ENCODE measurements at regions of chr19 and their contacts with region 1.

Region 1: DNA sequence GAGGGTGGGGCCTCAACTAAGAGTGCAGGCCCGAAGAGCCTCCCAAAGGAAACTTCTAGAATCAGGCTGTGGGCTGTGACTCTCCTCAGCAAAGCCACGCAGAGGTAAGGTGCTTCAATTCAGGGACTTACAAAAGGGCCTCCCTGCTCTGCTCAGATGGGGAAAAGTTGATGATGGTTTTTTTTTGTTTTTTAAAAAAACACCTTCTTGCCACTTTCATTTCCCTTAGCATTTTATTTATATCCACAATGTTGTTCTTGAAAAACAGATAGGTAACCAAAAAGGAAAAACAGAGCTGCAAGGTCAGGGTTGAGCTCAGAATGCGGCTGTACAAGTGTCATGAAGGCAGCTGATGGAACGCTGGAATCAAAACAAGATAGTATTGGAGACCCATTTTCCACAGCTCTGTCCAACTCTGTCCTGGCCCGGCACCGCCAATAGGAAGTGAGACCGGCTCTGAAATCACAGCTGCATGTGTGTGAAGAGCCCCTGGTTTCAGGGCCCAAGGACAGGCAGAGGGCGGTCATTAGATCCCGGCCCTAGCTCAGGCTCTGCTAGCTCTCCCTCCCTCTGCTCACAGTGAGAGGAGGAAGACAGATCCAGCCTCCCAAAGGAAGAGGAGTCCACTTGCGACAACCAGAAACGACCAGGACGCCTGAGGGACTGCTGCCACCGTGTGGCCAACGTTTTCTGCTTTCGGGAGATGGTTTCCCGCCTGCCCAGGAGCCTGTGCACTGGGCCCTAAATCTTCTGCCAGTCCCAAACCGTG is 58.3 kb downstream of the KLF2 start:
- DNase-seq: peak; percentile 36
- ATAC-seq: peak; percentile 72
- H3K4me3 ChIP-seq: no peak overlapping the region
- H3K27ac ChIP-seq: no peak overlapping the region
- H3K4me1 ChIP-seq: no peaks in the 10 kb centered on the region
- H3K27me3 ChIP-seq: no peaks in the 10 kb centered on the region
- CTCF ChIP-seq: peak; percentile 84
- EP300 ChIP-seq: no peak
- POLR2A ChIP-seq: no peak
- RAD21 ChIP-seq: peak; percentile 63; the same call in 1 of the 2 replicates

Region 2: GRCh38 chr19:16041299-16041990 is 341.5 kb before region 1 on chr19:
- CTCF ChIA-PET with region 1: no interaction called
- POLR2A ChIA-PET with region 1: no interaction called
- in situ Hi-C with region 1: loop called (anchors 25 kb)
- intact Hi-C with region 1: no loop called
- DNase-seq: peak; percentile 52
- ATAC-seq: peak; percentile 86
- H3K4me3 ChIP-seq: 0 out of 6 replicates have a peak overlapping the region, but pooled peaks of 1 of the 3 experiments have one; percentile 17
- H3K27ac ChIP-seq: no peak overlapping the region
- H3K4me1 ChIP-seq: peaks cover 17% of the 10 kb centered on the region
- H3K27me3 ChIP-seq: peaks cover 0 to 9% of the 10 kb centered on the region in 2 experiments; a peak in 3 of 5 replicates
- CTCF ChIP-seq: peak; percentile 95
- EP300 ChIP-seq: no peak
- POLR2A ChIP-seq: no peak
- RAD21 ChIP-seq: peak; percentile 90

Region 3: DNA sequence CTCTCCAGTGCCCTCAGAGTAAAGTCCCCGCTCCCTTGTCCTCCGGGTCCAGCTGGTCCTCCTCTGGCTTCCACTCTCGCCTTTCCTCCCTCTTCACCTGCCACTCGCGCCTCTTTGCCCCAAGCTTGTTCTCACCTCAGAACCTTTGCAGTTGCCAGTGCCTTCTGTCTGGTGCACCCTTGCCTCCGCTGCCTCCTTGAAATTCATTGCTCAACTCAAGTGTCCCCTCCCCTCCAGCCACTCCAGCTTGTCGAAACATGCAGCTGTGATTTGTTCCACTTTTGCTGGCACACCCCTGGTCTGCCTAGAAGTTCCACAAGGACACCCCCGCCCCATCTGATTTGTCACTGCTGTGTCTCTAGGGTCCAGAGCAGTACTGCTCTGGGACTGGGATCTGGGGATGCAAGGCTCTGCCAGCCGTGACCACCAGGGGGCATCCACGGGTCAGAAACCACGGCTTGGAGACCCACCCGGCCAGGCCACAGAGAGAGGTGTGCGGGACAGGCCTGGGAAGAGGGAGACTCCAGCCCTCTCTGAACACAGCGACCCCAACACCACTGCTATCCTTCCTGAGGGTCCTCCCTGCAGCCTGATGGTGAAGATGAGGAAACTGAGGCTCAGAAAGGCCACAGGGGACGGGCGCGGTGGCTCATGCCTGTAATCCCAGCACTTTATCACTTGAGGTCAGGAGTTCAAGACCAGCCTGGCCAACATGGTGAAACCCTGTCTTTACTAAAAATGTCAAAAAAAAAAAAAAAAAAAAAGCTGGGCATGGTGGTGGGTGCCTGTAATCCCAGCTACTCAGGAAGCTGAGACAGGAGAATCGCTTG is 135.4 kb before region 1 on chr19:
- CTCF ChIA-PET with region 1: interaction called, 28 read pairs
- POLR2A ChIA-PET with region 1: no interaction called
- in situ Hi-C with region 1: loop called (anchors 5 kb)
- intact Hi-C with region 1: loop called (anchors 1 kb)
- DNase-seq: peak; percentile 51
- ATAC-seq: peak; percentile 99
- H3K4me3 ChIP-seq: no peak overlapping the region
- H3K27ac ChIP-seq: no peak overlapping the region
- H3K4me1 ChIP-seq: no peaks in the 10 kb centered on the region
- H3K27me3 ChIP-seq: no peaks in the 10 kb centered on the region
- CTCF ChIP-seq: peak; percentile 98
- EP300 ChIP-seq: no peak
- POLR2A ChIP-seq: no peak
- RAD21 ChIP-seq: peak; percentile 94

Region 4: DNA sequence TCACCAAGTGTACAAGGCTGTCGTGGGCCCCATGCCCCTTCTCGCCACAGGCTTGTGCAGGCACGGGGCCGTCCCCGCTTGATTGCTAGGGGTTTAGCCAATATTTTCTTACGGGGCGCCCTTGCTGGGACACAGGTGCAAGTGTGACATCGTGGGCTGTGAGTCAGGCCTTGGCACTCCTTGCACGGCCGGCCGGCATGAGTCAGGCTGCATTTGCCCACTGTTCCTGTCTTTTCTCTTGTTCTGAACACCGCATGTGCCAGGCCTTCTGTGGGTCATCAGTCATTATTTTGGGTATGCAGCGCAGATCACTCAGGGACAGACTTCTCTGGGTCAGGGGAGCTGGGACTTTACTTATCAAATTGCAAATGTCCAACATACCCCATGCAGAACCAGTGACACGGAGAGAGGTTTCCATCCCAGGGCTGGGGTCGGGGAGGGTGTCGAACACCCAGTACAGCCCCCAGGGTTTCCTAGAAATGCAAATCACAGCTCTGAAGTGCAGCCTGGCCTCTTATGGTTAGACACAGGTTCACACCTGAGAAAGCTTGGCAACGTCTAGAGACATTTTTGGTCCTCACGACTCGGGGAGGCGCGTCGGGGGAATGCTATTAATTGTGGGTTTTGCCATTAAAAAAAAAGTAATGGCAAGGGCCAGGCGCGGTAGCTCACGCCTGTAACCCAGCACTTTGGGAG is 80.8 kb before region 1 on chr19:
- CTCF ChIA-PET with region 1: no interaction called
- POLR2A ChIA-PET with region 1: no interaction called
- in situ Hi-C with region 1: no loop called
- intact Hi-C with region 1: no loop called
- DNase-seq: no peak
- ATAC-seq: no peak
- H3K4me3 ChIP-seq: no peak overlapping the region
- H3K27ac ChIP-seq: no peak overlapping the region
- H3K4me1 ChIP-seq: no peaks in the 10 kb centered on the region
- H3K27me3 ChIP-seq: peaks cover 0 to 4% of the 10 kb centered on the region in 2 experiments; a peak in 1 of 5 replicates
- CTCF ChIP-seq: no peak
- EP300 ChIP-seq: no peak
- POLR2A ChIP-seq: no peak
- RAD21 ChIP-seq: no peak